Dendritic cell treated with granulocyte-macrophage colony-stimulating factor and Interleukin-4, amounts not matched to agents 40 ng/mL and 50 ng/mL, for 4 days (primary cell): ENCODE measurements at regions of chr14 and their contacts with region 1.

Region 1: DNA sequence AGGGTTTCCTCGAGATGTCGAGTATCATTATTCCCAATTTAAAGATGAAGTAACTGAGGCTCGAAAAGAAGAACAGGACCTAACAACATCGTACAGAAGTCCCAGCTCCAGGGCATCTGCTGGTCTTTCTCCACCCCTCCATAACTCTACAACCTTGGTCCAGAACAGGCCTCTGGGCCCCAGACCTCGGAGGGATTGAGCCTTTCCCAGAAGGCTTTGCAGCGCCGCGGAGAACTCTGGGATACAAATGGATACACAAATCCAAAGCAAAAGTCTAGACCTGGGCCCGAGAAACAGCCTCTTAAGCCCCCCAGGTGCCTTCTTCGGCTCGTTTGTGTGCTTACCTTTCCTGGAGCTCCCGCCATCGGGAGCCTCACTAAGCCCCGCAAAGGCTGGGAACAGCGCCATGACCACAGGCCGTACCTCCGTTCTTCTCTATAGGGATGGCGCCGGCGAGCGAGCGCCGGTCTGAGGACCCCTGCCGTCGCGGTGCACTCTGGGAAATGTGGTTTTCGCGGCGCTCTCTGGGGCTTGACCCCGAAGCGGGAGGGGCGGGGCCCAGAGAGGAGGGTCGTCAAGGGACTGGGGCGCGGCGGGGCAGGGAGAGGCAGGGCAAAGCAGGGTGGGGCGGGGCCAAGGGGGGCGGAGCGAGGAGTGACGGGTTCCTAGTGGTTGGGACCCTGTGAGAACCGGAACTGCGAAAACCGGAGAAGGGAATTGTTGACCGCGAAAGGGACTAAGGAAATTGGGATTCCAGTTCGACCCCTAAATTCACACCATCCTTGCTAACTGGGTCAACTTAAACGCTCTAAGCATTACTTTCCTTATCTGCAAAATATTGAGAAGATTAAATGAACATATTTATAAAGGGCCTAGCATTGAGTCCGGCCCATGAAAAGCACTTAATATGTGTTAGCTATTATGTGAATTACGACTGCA is at the start of gene NRDE2:
- H3K4me3 Mint-ChIP-seq: peak within 1 kb of the TSS; percentile 81
- H3K27ac Mint-ChIP-seq: peak within 1 kb of the TSS; percentile 95
- H3K4me1 Mint-ChIP-seq: peaks cover 13% of the 10 kb centered on the region
- H3K27me3 Mint-ChIP-seq: peaks cover 23% of the 10 kb centered on the region

Region 2: GRCh38 chr14:89954070-89955028 is 377.4 kb before region 1 on chr14 and contains the start of gene EFCAB11:
- intact Hi-C with region 1: loop called (anchors 5 kb)
- H3K4me3 Mint-ChIP-seq: peak within 1 kb of the TSS; percentile 97
- H3K27ac Mint-ChIP-seq: peak within 1 kb of the TSS; percentile 81
- H3K4me1 Mint-ChIP-seq: peaks cover 33% of the 10 kb centered on the region
- H3K27me3 Mint-ChIP-seq: no peaks in the 10 kb centered on the region

Region 3: DNA sequence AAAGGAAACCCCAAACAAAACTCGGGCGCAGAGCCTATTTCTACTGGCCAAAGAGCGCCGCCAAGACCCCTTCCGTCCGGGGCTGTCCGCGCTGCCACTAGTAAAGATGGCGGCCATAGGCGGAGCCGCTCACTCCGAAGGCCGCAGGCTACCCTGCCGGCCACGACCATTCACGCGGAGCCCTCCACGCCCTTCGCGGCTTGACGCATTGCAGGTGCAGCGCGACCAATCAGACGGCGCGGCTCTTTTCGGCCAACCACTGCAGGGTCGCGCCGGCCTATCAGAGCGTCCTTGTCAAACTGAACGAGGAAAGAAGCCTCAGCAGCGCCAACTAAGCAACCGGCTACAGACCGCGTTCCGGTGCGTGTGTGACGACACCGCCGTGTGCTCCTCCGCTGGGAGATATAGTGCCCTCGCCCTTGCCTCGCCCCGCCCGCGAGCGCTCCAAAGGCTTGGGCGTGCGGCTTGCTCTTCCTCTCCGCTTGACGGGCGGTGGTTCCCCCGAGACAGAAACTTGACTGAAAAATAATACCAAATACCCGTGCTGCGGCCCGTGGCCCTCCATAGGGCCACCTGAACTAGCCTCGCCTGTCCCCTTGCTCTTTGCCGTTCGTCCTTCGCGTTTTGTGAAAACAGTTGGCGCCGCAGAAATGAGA is 51.4 kb after region 1 on chr14:
- intact Hi-C with region 1: loop called (anchors 1 kb)
- H3K4me3 Mint-ChIP-seq: no peak overlapping the region
- H3K27ac Mint-ChIP-seq: no peak overlapping the region
- H3K4me1 Mint-ChIP-seq: peaks cover 9% of the 10 kb centered on the region
- H3K27me3 Mint-ChIP-seq: no peaks in the 10 kb centered on the region

Region 4: GRCh38 chr14:90444036-90444696 is 112.4 kb after region 1 on chr14:
- intact Hi-C with region 1: no loop called
- H3K4me3 Mint-ChIP-seq: no peak overlapping the region
- H3K27ac Mint-ChIP-seq: no peak overlapping the region
- H3K4me1 Mint-ChIP-seq: peaks cover 16% of the 10 kb centered on the region
- H3K27me3 Mint-ChIP-seq: peaks cover 10% of the 10 kb centered on the region